Upper lobe of right lung (tissue), 1 donor: ENCODE measurements at regions of chr18 and their contacts with region 1.

Region 1: DNA sequence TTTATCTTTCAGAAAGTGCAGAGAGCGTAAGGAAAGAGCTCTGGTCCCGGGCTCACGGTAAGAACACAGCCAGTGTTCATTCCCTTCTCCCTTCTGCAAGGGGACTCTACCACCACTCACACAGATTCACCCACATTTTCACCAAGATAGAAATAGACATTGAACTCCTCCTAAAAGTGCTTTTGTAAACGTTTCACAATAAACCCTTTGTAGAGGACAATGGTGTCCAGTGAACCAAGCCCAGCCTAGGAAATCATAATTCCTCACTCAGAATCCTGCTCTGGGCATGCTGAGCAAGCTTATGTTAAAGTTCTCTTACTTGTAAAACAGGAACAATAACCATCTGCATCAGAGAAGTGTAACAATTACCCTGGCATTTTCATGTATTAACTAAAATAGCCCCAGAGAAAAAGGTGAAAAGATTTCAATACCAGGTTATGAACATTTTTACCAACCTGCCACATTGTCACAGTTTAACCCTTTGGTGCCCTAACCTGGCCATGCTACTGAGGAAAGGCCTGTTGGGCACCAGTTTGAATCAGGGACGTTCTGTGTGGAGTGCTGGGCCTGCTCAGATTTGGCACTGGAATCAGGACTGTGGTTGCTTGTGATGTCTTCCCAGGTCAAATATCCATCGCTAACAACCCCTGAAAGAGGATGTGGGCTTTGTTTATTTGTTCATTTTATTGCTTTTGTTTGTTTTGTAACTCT is 22.5 kb upstream of the NDUFV2 start:
- DNase-seq: no peak
- ATAC-seq: no peak
- H3K4me3 ChIP-seq: no peak overlapping the region
- H3K27ac ChIP-seq: no peak overlapping the region
- H3K4me1 ChIP-seq: peaks cover 11% of the 10 kb centered on the region
- H3K27me3 ChIP-seq: no peaks in the 10 kb centered on the region
- CTCF ChIP-seq: no peak

Region 2: DNA sequence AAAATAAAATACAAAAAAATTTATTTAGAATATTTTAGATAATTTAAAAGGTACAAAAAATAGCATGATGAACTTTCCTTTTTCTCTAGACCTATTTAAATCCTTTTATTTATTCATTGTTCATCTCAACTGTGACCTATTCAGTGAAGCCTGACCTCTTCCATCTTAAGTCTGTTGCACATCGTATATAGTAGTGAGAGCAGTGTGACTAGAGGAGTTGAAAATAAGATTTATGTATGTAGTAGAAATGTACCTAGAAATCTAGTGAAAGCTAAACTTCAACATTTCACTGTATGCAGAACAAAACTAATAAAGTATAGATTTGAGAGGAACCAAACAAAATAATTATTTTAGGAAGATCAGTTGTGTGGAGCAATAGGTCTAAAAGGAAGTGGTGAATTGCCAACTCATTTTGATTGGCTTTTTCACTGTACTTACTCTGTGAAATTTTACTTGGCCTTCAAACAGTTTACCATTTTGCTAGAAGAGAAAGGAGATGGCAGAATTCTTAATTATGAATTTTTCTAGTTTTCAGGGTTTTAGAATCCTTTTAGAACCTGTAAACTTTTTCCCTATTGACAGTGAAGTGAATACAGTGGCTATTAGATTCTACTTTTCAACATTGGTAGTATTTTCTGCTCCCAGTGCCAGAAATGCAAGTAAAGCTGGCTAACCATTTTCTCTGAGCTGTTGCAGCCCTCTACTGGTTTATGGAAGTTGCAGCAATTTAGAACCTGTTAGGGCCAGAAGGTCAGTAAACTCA is 67.6 kb after region 1 on chr18:
- intact Hi-C with region 1: loop called (anchors 10 kb)
- DNase-seq: no peak
- ATAC-seq: peak; percentile 94
- H3K4me3 ChIP-seq: no peak overlapping the region
- H3K27ac ChIP-seq: peak overlapping the region; percentile 20
- H3K4me1 ChIP-seq: peaks cover 72% of the 10 kb centered on the region
- H3K27me3 ChIP-seq: no peaks in the 10 kb centered on the region
- CTCF ChIP-seq: peak; percentile 74